Activated naive CD4-positive, alpha-beta T cell treated with anti-CD3 and anti-CD28 coated beads for 36 hours (primary cell): ENCODE measurements at regions of chr6 and their contacts with region 1.

Region 1: DNA sequence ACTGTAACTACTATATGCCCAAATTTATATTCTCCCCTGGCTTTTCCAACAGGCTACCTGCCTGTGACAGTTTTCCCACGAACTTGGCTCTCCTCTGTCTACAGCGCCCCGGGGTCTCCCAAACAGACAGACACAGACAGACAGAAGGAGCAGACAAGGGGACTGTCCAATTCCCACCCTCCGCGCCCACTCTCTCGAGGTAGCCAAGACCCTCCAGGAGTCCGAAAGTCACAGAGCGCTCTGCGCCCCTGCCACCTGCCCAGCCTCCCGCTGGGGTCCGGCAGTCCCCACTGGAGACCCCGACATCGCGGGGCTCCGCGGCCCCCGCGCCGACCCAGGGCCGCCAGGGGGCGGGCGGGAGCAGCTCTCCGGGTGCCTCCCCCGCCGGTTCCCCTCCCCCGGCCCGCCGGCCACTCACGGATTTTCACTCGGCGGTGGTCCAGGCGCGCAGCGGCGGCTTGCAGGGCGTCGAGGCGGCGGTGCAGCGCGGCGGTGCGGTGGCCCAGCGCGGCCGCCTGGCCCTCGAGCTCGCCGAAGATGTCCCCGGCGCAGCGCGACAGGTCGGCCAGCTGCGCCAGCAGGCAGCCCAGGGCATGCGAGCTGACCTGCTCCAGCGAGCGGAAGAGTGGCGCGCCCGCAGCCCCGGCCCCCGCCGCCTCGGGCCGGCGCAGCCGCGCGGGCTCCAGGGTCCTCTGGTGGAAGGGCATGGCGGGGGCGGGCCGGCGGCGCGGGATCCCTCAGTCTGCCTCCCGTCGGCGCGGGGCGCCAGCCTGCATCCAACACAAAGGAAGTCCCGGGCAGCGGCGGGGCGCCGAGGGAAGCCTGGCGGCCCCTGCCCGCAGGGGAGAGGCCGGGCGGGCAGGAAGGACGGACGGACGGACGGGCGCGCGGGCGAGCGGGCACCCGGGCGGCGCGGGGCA is 81.3 kb upstream of the CCDC28A start:
- DNase-seq: peak; percentile 50
- H3K4me3 Mint-ChIP-seq: peak overlapping the region; percentile 79
- H3K27ac Mint-ChIP-seq: no peak overlapping the region
- H3K4me1 Mint-ChIP-seq: peaks cover 5% of the 10 kb centered on the region
- H3K27me3 Mint-ChIP-seq: peaks cover 32% of the 10 kb centered on the region

Region 2: DNA sequence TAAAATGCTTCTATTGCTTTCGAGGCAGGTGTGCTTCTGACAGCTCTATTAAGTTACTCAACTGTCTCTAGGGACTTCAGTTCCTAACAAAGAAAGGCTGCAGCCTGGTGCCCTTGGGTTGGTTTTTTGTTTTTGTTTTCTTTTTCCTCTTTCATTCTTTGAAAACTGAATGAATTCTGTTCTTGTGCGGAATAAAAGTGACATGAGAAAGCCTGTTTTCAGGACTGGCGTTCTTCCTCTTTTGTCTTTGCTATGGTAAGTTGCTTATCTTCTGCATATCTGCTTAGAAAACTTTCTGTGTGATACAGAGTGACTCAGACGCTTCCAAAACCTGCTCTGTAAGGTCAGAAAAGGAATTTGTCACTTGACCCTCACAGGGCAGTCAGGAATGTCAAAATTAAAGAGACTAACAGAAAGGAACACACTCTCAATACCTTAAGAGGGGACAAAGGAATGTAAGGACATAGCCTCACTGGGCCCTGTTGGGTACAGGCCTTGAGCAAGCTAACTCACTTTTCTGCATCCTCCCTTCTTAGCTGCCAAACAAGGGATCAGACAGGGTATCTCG is 136.8 kb before region 1 on chr6:
- CTCF ChIA-PET with region 1: no interaction called
- intact Hi-C with region 1: no loop called
- DNase-seq: no peak
- H3K4me3 Mint-ChIP-seq: no peak overlapping the region
- H3K27ac Mint-ChIP-seq: no peak overlapping the region
- H3K4me1 Mint-ChIP-seq: no peaks in the 10 kb centered on the region
- H3K27me3 Mint-ChIP-seq: peaks cover 3% of the 10 kb centered on the region

Region 3: GRCh38 chr6:138654715-138655634 is 37.3 kb before region 1 on chr6:
- CTCF ChIA-PET with region 1: interaction called, 4 read pairs
- intact Hi-C with region 1: loop called (anchors 2 kb)
- DNase-seq: peak; percentile 76
- H3K4me3 Mint-ChIP-seq: no peak overlapping the region
- H3K27ac Mint-ChIP-seq: peak overlapping the region; percentile 36
- H3K4me1 Mint-ChIP-seq: peaks cover 25% of the 10 kb centered on the region
- H3K27me3 Mint-ChIP-seq: peaks cover 28% of the 10 kb centered on the region

Region 4: DNA sequence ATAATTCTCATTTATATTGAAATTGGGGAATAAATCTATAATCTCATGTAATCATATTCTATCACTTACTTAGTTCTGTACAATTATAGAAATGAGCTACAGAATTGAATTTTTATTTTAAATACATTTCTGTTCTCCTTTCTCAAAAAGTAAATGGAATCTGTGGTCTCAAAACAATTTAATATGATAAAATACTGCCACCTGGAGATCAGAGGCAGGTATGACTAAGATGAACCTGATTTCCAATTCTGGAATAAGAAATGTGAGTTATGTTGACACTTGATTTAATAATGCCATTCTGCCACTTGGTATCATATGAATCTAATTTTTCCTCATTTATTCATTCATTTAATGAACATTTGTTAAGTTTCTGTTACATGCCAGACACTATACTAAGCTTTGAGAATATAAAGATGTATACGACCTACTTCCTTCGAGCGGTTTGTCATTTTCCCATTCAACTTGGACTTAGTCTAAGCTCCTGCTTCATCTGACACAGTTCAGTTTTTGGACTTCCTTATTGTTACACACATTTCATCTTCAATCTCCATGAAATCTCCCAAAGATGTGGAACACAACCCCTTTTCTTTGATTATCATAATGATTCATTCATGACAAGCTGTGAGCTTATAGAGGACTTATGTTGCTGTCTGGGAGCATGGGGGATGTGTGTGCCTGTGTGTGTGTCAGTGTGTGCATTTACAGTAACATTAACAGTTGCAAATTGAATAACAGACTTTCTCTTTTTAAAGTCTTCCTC is 73.8 kb after region 1 on chr6:
- CTCF ChIA-PET with region 1: interaction called, 9 read pairs
- intact Hi-C with region 1: loop called (anchors 1 kb)
- DNase-seq: no peak
- H3K4me3 Mint-ChIP-seq: no peak overlapping the region
- H3K27ac Mint-ChIP-seq: no peak overlapping the region
- H3K4me1 Mint-ChIP-seq: peaks cover 16% of the 10 kb centered on the region
- H3K27me3 Mint-ChIP-seq: no peaks in the 10 kb centered on the region